Activated CD4-positive, alpha-beta T cell treated with anti-CD3 and anti-CD28 coated beads, Interleukin-2, amount 10 ng/mL, durations not matched to agents 24 days and 14 days (primary cell): ENCODE measurements at regions of chr6 and their contacts with region 1.

Region 1: DNA sequence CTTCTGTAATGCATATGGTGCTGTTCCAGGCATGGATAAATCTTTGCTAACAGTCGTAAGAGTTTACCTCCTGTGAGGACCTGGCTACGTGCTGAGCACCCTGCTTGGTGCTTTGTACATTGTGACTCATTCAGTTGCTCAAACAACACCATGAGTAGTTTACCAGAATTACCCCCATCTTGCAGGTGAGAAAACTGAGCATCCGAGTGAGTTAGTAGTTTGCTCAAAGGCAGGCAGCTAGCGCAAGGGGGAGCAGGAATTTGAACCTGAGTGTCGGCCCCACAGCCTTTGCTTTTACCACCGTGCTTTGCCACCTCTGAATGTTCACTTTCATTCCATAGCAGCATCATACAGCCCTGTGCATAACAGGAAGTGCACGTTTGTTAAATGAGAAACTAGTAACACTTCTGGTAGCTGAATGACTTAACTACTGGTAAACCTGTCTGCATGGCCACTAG is 121.9 kb downstream of the MTHFD1L start:
- DNase-seq: peak; percentile 85
- H3K4me3 Mint-ChIP-seq: peak overlapping the region; percentile 64
- H3K27ac Mint-ChIP-seq: peak overlapping the region; percentile 98
- H3K4me1 Mint-ChIP-seq: peaks cover 14% of the 10 kb centered on the region
- H3K27me3 Mint-ChIP-seq: no peaks in the 10 kb centered on the region

Region 2: GRCh38 chr6:151004415-151005024 is 17.1 kb after region 1 on chr6:
- intact Hi-C with region 1: loop called (anchors 1 kb)
- DNase-seq: no peak
- H3K4me3 Mint-ChIP-seq: no peak overlapping the region
- H3K27ac Mint-ChIP-seq: peak overlapping the region; percentile 23
- H3K4me1 Mint-ChIP-seq: peaks cover 33% of the 10 kb centered on the region
- H3K27me3 Mint-ChIP-seq: no peaks in the 10 kb centered on the region

Region 3: DNA sequence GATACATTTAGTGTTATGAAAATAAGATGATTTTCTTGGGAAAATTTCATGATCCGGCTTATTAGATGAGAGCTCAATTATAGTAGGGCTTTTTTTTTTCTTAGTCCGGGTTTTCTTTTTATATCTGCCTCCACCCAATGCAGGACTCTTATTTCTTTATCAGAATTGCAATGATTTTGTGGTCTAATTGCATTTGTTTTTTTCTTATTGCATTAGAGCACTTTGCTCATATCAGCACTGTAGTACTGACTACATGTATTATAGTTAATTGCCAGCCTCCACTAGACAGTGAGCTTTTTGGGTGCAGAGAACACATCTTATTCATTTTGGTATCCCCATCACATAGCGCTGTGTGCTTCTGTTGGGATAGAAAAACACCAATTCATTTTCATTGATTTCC is 1945.5 kb after region 1 on chr6:
- intact Hi-C with region 1: no loop called
- DNase-seq: no peak
- H3K4me3 Mint-ChIP-seq: no peak overlapping the region
- H3K27ac Mint-ChIP-seq: no peak overlapping the region
- H3K4me1 Mint-ChIP-seq: no peaks in the 10 kb centered on the region
- H3K27me3 Mint-ChIP-seq: peaks cover 2% of the 10 kb centered on the region